ENCODE measurements at regions of chr22 and their contacts with region 1.

Region 1: GRCh38 chr22:30754971-30755756 is 60.5 kb downstream of the OSBP2 start:
- DNase-seq: peak; percentile 70
- H3K4me3 ChIP-seq: no peak overlapping the region
- H3K27ac ChIP-seq: no peak overlapping the region
- H3K4me1 ChIP-seq: no peaks in the 10 kb centered on the region
- H3K27me3 ChIP-seq: no peaks in the 10 kb centered on the region
- CTCF ChIP-seq: peak; percentile 64 to 83 (median 67)
- EP300 ChIP-seq: no peak
- POLR2A ChIP-seq: no peak

Region 2: DNA sequence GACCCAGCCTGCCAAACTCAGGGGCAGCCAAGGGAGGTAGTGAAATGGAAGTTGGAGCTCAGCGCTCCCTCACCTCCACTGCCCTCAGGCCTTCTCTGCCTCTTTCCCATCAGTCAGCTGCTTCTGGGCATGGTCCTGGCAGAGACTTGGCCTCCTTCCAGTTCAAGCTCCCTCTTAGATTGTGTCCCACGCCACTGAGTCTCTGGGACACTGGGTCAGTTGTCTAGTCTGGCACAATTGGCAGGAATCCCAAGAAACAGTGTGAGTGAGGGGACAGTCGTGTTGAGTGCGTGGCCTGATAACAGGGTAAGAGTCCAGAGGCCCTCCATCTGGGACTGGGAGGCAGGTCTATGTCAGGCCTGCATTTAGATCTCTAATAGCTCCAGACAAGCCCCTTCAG is 126.7 kb before region 1 on chr22:
- in situ Hi-C with region 1: loop called in 3 of 4 experiments (anchors 5 to 10 kb)
- intact Hi-C with region 1: no loop called
- DNase-seq: no peak
- H3K4me3 ChIP-seq: no peak overlapping the region
- H3K27ac ChIP-seq: no peak overlapping the region
- H3K4me1 ChIP-seq: no peaks in the 10 kb centered on the region
- H3K27me3 ChIP-seq: no peaks in the 10 kb centered on the region
- CTCF ChIP-seq: no peak
- EP300 ChIP-seq: no peak
- POLR2A ChIP-seq: no peak

Region 3: GRCh38 chr22:30781271-30781875 is 26.2 kb after region 1 on chr22:
- in situ Hi-C with region 1: no loop called
- intact Hi-C with region 1: loop called (anchors 1 kb)
- DNase-seq: no peak
- H3K4me3 ChIP-seq: no peak overlapping the region
- H3K27ac ChIP-seq: no peak overlapping the region
- H3K4me1 ChIP-seq: no peaks in the 10 kb centered on the region
- H3K27me3 ChIP-seq: no peaks in the 10 kb centered on the region
- CTCF ChIP-seq: no peak
- EP300 ChIP-seq: no peak
- POLR2A ChIP-seq: no peak

Measured in transverse colon (tissue), 4 donors.